Prostate gland (tissue), 2 donors: ENCODE measurements at regions of chr5 and their contacts with region 1.

Region 1: DNA sequence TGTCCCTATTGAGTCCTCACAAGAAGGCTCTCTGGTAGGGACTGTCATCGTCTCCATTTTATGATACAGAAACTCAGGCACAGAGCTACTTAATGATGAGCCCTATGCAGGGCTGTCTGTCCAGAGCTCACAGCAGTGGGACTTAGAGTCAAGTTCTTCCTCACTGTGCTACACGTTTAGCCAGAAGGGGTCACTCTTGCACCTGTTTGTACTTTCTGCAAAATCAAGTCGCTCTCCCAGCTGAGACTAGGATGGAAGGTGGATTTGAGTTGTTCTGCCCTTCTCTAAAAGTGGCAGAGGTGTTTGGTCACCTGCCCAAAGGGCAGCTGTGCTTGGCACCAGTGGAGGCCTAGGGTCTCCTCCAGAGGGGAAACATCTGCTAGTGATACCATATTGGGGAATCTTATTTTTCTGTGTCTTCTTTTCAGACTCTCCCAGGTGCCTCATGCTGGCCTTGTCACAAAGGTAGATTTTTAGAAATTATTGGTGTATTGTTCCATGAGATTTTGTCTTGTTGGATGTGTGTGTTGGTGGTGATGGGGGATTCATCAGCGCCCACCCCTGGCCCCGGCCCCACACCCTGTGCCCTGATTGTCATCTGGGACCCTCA is 104.2 kb downstream of the PPARGC1B start:
- DNase-seq: peak; percentile 81
- H3K4me3 ChIP-seq: no peak overlapping the region
- H3K27ac ChIP-seq: no peak overlapping the region
- H3K4me1 ChIP-seq: no peaks in the 10 kb centered on the region
- H3K27me3 ChIP-seq: no peaks in the 10 kb centered on the region
- CTCF ChIP-seq: peak; percentile 21 to 81 (median 70)
- POLR2A ChIP-seq: no peak

Region 2: GRCh38 chr5:149924486-149924885 is 90.1 kb after region 1 on chr5:
- intact Hi-C with region 1: no loop called
- DNase-seq: no peak
- H3K4me3 ChIP-seq: no peak overlapping the region
- H3K27ac ChIP-seq: no peak overlapping the region
- H3K4me1 ChIP-seq: no peaks in the 10 kb centered on the region
- H3K27me3 ChIP-seq: no peaks in the 10 kb centered on the region
- CTCF ChIP-seq: no peak
- POLR2A ChIP-seq: no peak

Region 3: GRCh38 chr5:149960272-149961185 is 126.2 kb after region 1 on chr5 and contains the start of gene SLC26A2:
- intact Hi-C with region 1: loop called (anchors 2 kb)
- DNase-seq: peak; percentile 99
- H3K4me3 ChIP-seq: peak within 1 kb of the TSS; percentile 77
- H3K27ac ChIP-seq: peak within 1 kb of the TSS; percentile 87 to 92
- H3K4me1 ChIP-seq: no peaks in the 10 kb centered on the region
- H3K27me3 ChIP-seq: no peaks in the 10 kb centered on the region
- CTCF ChIP-seq: peak in 2 of 4 experiments; percentile 2 to 23
- POLR2A ChIP-seq: peak; percentile 92
- total RNA-seq, gene SLC26A2: 19.4 to 31.0 TPM

Region 4: GRCh38 chr5:149990518-149991376 is 156.4 kb after region 1 on chr5:
- intact Hi-C with region 1: loop called (anchors 2 kb)
- DNase-seq: peak; percentile 84
- H3K4me3 ChIP-seq: no peak overlapping the region
- H3K27ac ChIP-seq: peak overlapping the region in 1 of 2 donors; percentile 8
- H3K4me1 ChIP-seq: peaks cover 9% of the 10 kb centered on the region
- H3K27me3 ChIP-seq: no peaks in the 10 kb centered on the region
- CTCF ChIP-seq: peak; percentile 80 to 96 (median 91)
- POLR2A ChIP-seq: no peak

Region 5: DNA sequence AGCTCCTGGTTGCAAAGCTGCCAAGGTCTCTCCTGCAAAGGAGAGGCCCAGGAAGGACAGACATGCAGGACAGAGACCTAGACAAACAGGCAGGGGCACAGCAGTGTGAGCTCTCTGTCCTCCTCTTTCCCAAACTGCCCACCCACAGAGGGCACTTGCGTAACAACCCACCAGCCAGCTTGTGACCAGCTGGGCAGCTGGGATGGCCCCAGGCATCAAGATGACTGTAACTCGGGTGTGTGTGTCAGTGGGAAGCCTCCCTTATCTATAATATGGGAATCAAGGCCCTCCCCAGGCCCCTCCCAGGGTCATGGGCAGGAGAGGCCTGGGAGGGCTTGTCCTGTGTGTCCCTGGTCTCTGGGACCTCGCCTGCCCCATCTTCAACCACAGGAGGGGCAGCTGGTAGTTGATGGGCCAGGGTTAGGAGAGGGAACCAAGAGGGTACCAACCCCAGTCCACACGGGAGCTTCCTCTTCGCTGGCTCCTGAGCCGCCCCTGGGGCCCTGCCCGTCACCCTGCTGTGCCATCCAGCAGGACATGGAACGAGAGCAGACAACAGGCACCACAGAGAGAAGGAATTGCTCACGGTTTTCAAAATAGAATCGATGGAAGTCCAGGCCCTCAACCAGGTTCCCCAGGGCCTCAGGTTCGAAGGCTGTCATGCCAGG is 393.4 kb after region 1 on chr5:
- intact Hi-C with region 1: loop called (anchors 10 kb)
- DNase-seq: no peak
- H3K4me3 ChIP-seq: no peak overlapping the region
- H3K27ac ChIP-seq: no peak overlapping the region
- H3K4me1 ChIP-seq: no peaks in the 10 kb centered on the region
- H3K27me3 ChIP-seq: no peaks in the 10 kb centered on the region
- CTCF ChIP-seq: no peak
- POLR2A ChIP-seq: no peak